ENCODE measurements at regions of chr3 and their contacts with region 1.

Region 1: GRCh38 chr3:9731206-9732079 is at the start of gene BRPF1:
- DNase-seq: peak; percentile 98 to 100
- H3K4me3 ChIP-seq: peak within 1 kb of the TSS; percentile 99 to 100
- H3K27ac ChIP-seq: peak within 1 kb of the TSS; percentile 98
- H3K4me1 ChIP-seq: peaks cover 15 to 24% of the 10 kb centered on the region in 2 donors
- H3K27me3 ChIP-seq: no peaks in the 10 kb centered on the region
- CTCF ChIP-seq: peak in 1 of 3 experiments; percentile 7
- total RNA-seq, gene BRPF1: 18.6 TPM

Region 2: DNA sequence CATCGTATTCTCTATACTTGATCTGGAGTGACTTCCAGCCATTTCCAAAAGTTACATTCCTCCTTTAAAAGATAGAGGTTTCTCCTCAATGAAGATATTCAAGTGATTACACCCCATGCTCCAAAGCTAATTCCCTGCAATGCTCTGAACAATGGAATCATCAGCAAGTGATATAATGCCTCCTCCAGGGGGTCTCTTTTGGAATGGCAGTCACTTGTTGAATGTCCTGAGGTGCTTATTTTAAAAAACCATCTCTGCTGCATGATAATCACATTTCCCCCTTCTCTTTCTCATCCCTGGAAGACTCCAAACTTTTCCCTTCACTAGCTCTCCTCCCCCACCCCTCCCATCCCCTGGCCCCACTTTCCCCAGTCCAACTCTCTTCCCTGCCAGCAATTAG is 180.4 kb before region 1 on chr3:
- intact Hi-C with region 1: no loop called
- DNase-seq: no peak
- H3K4me3 ChIP-seq: no peak overlapping the region
- H3K27ac ChIP-seq: no peak overlapping the region
- H3K4me1 ChIP-seq: no peaks in the 10 kb centered on the region
- H3K27me3 ChIP-seq: peaks cover 17% of the 10 kb centered on the region
- CTCF ChIP-seq: no peak

Region 3: GRCh38 chr3:9649791-9650521 is 81.5 kb before region 1 on chr3:
- intact Hi-C with region 1: loop called (anchors 2 kb)
- DNase-seq: peak in 1 of 2 donors; percentile 61
- H3K4me3 ChIP-seq: peak overlapping the region; percentile 92 to 97
- H3K27ac ChIP-seq: peak overlapping the region; percentile 86 to 87
- H3K4me1 ChIP-seq: peaks cover 3 to 5% of the 10 kb centered on the region in 2 donors
- H3K27me3 ChIP-seq: no peaks in the 10 kb centered on the region
- CTCF ChIP-seq: no peak

Region 4: DNA sequence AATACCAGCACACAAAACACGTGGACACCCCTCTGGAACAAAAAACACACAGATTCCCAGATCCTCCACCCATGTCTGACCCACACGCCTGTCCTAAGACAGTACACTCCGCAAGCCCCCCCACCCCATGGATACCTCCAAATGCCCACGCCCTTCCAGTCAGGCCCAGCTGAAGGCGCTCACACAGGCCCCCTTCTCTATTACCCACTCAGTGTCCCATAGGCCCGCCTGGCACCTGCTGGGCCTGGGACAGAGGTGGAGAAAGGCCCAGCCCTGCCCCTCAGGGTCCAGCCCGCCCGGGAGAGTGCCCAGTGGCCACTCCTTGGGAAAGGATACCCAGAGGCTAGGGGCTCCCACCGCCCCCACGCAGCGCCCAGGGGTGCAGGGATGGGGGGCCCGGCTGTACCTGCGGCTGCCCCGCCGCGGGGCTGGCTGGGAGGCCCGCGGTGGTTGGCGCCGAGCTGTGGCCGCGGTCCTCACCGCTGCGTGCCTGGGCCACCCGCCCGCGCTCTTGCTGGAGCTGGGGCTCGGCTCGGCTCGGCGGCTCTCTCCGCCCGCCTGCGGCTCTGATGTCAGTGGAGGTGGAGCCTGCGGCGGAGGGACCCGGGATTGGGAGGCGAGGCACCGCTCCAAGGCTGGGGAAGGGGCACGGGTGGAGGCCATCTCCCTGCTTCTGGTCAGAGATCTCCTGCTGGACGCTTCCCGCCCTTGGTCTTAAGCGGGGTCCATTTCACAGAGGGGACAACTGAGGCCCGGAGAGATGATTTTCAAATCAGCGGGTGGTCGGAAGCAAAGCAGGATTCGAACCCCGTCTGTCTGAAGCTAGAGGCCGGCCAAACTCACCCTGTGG is 38.2 kb after region 1 on chr3 and contains the start of gene CAMK1:
- intact Hi-C with region 1: loop called (anchors 1 kb)
- DNase-seq: peak; percentile 43 to 91
- H3K4me3 ChIP-seq: peak within 1 kb of the TSS; percentile 73 to 92
- H3K27ac ChIP-seq: peak within 1 kb of the TSS; percentile 81 to 88
- H3K4me1 ChIP-seq: peaks cover 0 to 25% of the 10 kb centered on the region in 2 donors
- H3K27me3 ChIP-seq: no peaks in the 10 kb centered on the region
- CTCF ChIP-seq: no peak
- total RNA-seq, gene CAMK1: 82.9 TPM

Region 5: DNA sequence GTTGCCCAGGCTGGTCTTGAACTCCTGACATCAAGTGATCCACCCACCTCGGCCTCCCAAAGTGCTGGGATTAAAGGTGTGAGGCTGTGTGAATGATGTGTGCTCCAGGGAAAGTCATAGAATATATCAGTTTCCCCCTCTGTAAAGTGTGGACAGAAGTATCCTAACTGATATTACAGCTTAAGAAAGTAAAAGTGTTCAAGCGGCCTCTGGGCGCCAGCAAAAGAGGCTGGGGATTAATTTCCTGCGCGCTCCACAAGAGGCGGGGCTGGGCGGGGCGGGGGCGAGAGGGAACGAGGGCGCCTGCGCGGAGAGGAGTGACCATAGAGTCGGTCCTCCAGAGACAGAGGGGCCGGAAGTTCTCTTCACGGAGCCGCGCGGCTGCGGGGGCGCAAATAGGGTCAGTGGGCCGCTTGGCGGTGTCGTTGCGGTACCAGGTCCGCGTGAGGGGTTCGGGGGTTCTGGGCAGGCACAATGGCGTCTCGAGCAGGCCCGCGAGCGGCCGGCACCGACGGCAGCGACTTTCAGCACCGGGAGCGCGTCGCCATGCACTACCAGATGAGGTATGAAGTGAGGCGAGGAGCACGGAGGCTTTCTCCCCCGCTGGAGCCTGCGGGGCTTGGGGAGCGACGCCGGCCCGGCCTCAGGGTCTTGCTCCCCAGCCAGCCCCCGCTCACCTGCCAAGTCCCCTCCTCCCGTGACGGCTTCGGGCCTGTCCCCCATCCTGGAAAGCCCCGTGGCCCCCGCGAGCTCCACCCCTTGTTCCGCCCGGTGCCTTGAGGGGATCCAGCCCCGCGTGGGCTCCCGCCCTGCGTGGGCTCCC is 159.0 kb after region 1 on chr3 and contains the start of gene JAGN1:
- intact Hi-C with region 1: loop called (anchors 1 kb)
- DNase-seq: peak; percentile 46 to 93
- H3K4me3 ChIP-seq: peak within 1 kb of the TSS; percentile 90 to 98
- H3K27ac ChIP-seq: peak within 1 kb of the TSS; percentile 93 to 98
- H3K4me1 ChIP-seq: peaks cover 0 to 7% of the 10 kb centered on the region in 2 donors
- H3K27me3 ChIP-seq: no peaks in the 10 kb centered on the region
- CTCF ChIP-seq: no peak
- total RNA-seq, gene JAGN1: 55.2 TPM

Region 6: DNA sequence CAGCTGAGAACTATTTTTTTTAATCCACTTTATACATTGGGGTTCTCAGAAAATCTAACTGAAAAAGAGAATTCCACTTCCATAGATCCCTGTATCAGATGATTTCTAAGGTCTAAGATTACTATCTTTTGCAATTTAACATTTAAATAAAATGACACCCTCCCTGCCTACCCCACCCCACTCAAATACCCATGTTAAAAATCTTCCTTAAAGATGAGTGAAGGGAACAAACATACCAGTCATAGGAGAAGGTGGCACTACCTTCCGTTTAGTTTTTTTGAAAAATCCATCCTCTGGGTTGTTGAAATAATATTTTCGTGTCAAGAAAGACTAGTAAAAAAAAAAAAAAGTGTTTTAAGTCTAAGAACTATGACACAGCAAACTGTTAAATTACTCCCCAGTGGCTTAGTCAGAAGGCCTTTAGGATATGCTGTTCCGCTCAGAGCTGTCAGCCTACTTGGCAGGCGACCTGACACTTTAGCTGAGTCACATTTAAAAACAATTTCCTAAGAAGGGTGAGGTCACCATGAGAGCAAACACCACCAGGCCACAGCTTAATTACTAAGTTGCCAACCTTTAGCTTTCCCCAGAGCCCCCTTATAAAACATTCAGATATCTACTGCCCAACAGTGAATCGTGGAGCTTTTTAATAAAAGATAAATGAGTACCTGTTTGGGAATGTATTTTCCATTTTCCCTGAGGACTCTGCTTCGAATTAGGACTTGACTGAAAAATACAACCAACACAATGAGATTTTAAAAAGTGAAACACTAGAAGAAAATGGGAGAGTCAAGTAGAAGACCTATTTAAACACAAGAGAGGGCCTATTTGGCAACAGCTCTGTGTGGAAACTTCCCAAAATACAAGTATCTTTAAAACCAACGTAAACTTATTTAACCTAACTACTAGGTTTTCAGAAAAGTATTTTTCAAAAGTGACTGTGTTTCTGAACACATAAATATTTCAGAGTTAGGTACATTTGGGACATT is 245.6 kb after region 1 on chr3:
- intact Hi-C with region 1: loop called (anchors 5 kb)
- DNase-seq: peak; percentile 62 to 92
- H3K4me3 ChIP-seq: no peak overlapping the region
- H3K27ac ChIP-seq: peak overlapping the region; percentile 77 to 89
- H3K4me1 ChIP-seq: peaks cover 6 to 19% of the 10 kb centered on the region in 2 donors
- H3K27me3 ChIP-seq: no peaks in the 10 kb centered on the region
- CTCF ChIP-seq: no peak

Region 7: GRCh38 chr3:10173926-10174435 is 442.5 kb after region 1 on chr3:
- intact Hi-C with region 1: loop called (anchors 10 kb)
- DNase-seq: peak; percentile 96 to 98
- H3K4me3 ChIP-seq: peak overlapping the region in 1 of 2 donors; percentile 39
- H3K27ac ChIP-seq: peak overlapping the region; percentile 93 to 94
- H3K4me1 ChIP-seq: peaks cover 2 to 17% of the 10 kb centered on the region in 2 donors
- H3K27me3 ChIP-seq: no peaks in the 10 kb centered on the region
- CTCF ChIP-seq: no peak